T-cell (primary cell): ENCODE measurements at regions of chr13 and their contacts with region 1.

Region 1: GRCh38 chr13:69142101-69142500 is 965.5 kb upstream of the ATXN8OS start:
- DNase-seq: no peak
- ATAC-seq: no peak
- H3K4me3 ChIP-seq: no peak overlapping the region
- H3K4me3 Mint-ChIP-seq: no peak overlapping the region
- H3K27ac ChIP-seq: no peak overlapping the region
- H3K27ac Mint-ChIP-seq: no peak overlapping the region
- H3K4me1 ChIP-seq: no peaks in the 10 kb centered on the region
- H3K4me1 Mint-ChIP-seq: no peaks in the 10 kb centered on the region
- H3K27me3 ChIP-seq: no peaks in the 10 kb centered on the region
- H3K27me3 Mint-ChIP-seq: no peaks in the 10 kb centered on the region

Region 2: GRCh38 chr13:69155136-69155535 is 13.0 kb after region 1 on chr13:
- CTCF ChIA-PET with region 1: interaction called in 1 of 2 experiments, 10 read pairs
- POLR2A ChIA-PET with region 1: no interaction called
- DNase-seq: no peak
- ATAC-seq: no peak
- H3K4me3 ChIP-seq: no peak overlapping the region
- H3K4me3 Mint-ChIP-seq: no peak overlapping the region
- H3K27ac ChIP-seq: no peak overlapping the region
- H3K27ac Mint-ChIP-seq: no peak overlapping the region
- H3K4me1 ChIP-seq: no peaks in the 10 kb centered on the region
- H3K4me1 Mint-ChIP-seq: no peaks in the 10 kb centered on the region
- H3K27me3 ChIP-seq: no peaks in the 10 kb centered on the region
- H3K27me3 Mint-ChIP-seq: no peaks in the 10 kb centered on the region